Heart left ventricle (tissue), 16 donors: ENCODE measurements at regions of chr16 and their contacts with region 1.

Region 1: GRCh38 chr16:27374804-27375425 is 27.1 kb upstream of the IL21R start:
- DNase-seq: peak in 4 of 5 donors; percentile 54 to 77 (median 56)
- ATAC-seq: peak in 3 of 4 donors; percentile 83 to 91 (median 87)
- H3K4me3 ChIP-seq: peak overlapping the region in 5 of 12 donors; percentile 6 to 42 (median 22)
- H3K27ac ChIP-seq: peak overlapping the region in 5 of 12 donors; percentile 7 to 85 (median 27)
- H3K4me1 ChIP-seq: peaks cover 0 to 62% (median 0%) of the 10 kb centered on the region in 12 donors
- H3K27me3 ChIP-seq: no peaks in the 10 kb centered on the region
- CTCF ChIP-seq: peak in 8 of 12 donors; percentile 22 to 59 (median 45)
- POLR2A ChIP-seq: no peak

Region 2: DNA sequence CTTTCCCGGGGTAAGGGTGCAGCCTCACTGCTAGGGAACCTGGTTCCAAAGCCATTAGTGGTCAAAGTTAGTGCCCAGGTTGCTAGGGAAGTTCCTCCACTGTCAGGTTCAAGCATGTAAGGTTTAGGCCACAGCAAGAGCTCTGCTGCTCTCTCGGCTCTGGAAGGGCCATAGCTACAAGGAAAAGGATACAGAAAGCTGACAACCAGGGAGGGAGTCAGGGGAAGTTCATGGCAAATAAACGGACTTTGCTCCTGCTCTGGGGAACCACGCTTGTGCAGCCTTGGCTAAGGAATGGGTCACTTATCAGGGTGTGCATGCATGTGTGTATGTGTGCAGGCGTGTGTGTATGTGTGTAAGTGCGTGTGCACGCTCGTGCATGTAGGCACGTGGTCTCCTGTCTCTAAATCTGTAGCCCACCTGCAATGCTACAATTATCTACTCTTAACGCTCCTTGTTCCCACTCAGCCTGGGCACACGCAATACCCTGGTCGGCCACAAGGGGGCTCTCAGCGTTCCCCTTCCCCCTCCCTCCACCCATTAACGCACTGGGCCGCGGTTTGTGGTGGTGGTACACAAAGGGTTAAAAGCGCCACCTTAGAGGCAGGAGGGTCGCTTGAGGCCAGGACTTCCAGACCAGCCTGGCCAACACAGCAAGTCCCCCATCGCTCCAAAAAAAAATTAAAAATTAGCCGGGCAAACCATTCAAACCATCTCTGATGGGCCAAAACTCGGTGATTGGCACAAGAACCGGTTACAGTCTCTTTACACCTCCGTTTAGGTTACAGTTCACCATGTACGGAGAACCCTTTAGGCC is 220.0 kb before region 1 on chr16:
- intact Hi-C with region 1: loop called in 1 of 10 experiments (anchors 5 kb)
- DNase-seq: peak; percentile 37 to 82 (median 46)
- ATAC-seq: peak in 3 of 4 donors; percentile 70 to 86 (median 72)
- H3K4me3 ChIP-seq: no peak overlapping the region
- H3K27ac ChIP-seq: no peak overlapping the region
- H3K4me1 ChIP-seq: peaks cover 0 to 6% (median 0%) of the 10 kb centered on the region in 12 donors
- H3K27me3 ChIP-seq: no peaks in the 10 kb centered on the region
- CTCF ChIP-seq: peak; percentile 79 to 99 (median 95)
- POLR2A ChIP-seq: no peak

Region 3: GRCh38 chr16:27169511-27170071 is 205.3 kb before region 1 on chr16:
- intact Hi-C with region 1: loop called in 1 of 10 experiments (anchors 5 kb)
- DNase-seq: no peak
- ATAC-seq: peak in 1 of 4 donors; percentile 27
- H3K4me3 ChIP-seq: no peak overlapping the region
- H3K27ac ChIP-seq: no peak overlapping the region
- H3K4me1 ChIP-seq: peaks cover 0 to 11% (median 0%) of the 10 kb centered on the region in 12 donors
- H3K27me3 ChIP-seq: no peaks in the 10 kb centered on the region
- CTCF ChIP-seq: peak in 1 of 12 donors; percentile 7
- POLR2A ChIP-seq: no peak

Region 4: GRCh38 chr16:27235055-27235937 is 139.6 kb before region 1 on chr16:
- intact Hi-C with region 1: loop called in 1 of 10 experiments (anchors 5 kb)
- DNase-seq: peak; percentile 88 to 94 (median 91)
- ATAC-seq: peak; percentile 57 to 82 (median 81)
- H3K4me3 ChIP-seq: peak overlapping the region in 7 of 12 donors; percentile 5 to 31 (median 11)
- H3K27ac ChIP-seq: peak overlapping the region; percentile 24 to 91 (median 60)
- H3K4me1 ChIP-seq: peaks cover 0 to 73% (median 35%) of the 10 kb centered on the region in 12 donors
- H3K27me3 ChIP-seq: no peaks in the 10 kb centered on the region
- CTCF ChIP-seq: peak; percentile 67 to 93 (median 82)
- POLR2A ChIP-seq: no peak

Region 5: DNA sequence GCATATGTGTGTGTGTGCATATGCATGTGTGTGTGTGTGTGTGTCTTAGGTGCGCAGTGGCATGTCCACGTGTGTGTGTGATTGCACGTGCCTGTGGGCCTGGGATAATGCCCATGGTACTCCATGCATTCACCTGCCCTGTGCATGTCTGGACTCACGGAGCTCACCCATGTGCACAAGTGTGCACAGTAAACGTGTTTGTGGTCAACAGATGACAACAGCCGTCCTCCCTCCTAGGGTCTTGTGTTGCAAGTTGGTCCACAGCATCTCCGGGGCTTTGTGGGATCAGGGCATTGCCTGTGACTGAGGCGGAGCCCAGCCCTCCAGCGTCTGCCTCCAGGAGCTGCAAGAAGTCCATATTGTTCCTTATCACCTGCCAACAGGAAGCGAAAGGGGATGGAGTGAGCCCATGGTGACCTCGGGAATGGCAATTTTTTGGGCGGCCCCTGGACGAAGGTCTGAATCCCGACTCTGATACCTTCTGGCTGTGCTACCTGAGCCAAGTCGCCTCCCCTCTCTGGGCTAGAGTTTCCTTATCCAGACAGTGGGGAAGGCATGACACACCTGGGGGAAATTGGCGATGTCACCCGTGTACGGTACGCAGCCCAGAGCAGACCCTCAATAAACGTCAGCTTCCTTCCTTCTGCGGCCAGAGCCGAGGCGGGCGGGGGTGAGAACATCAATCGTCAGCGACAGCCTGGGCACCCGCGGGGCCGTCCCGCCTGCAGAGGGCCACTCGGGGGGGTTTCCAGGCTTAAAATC is 74.7 kb after region 1 on chr16:
- intact Hi-C with region 1: loop called in 1 of 10 experiments (anchors 5 kb)
- DNase-seq: peak in 1 of 5 donors; percentile 65
- ATAC-seq: peak in 1 of 4 donors; percentile 70
- H3K4me3 ChIP-seq: no peak overlapping the region
- H3K27ac ChIP-seq: peak overlapping the region in 1 of 12 donors; percentile 29
- H3K4me1 ChIP-seq: peaks cover 0 to 30% (median 0%) of the 10 kb centered on the region in 12 donors
- H3K27me3 ChIP-seq: peaks cover 0 to 41% (median 14%) of the 10 kb centered on the region in 9 donors
- CTCF ChIP-seq: no peak
- POLR2A ChIP-seq: no peak